ENCODE measurements at regions of chr22 and their contacts with region 1.

Region 1: GRCh38 chr22:30634471-30635233 is 929 bp upstream of the SLC35E4 start:
- DNase-seq: peak; percentile 86 to 88
- ATAC-seq: peak; percentile 81 to 84
- H3K4me3 ChIP-seq: peak overlapping the region; percentile 80
- H3K27ac ChIP-seq: peak overlapping the region; percentile 67 to 97
- H3K4me1 ChIP-seq: peaks cover 21% of the 10 kb centered on the region
- CTCF ChIP-seq: peak; percentile 78
- EP300 ChIP-seq: no peak
- POLR2A ChIP-seq: no peak
- RAD21 ChIP-seq: peak; percentile 79 to 81

Region 2: GRCh38 chr22:30606455-30607299 is 28.0 kb before region 1 on chr22 and contains the start of gene TCN2:
- CTCF ChIA-PET with region 1: interaction called, 27 read pairs
- POLR2A ChIA-PET with region 1: interaction called, 3 read pairs
- DNase-seq: peak; percentile 58 to 69
- ATAC-seq: peak; percentile 83 to 84
- H3K4me3 ChIP-seq: peak within 1 kb of the TSS; percentile 51
- H3K27ac ChIP-seq: peak within 1 kb of the TSS; percentile 78 to 90
- H3K4me1 ChIP-seq: peaks cover 32% of the 10 kb centered on the region
- CTCF ChIP-seq: no peak
- EP300 ChIP-seq: no peak
- POLR2A ChIP-seq: no peak
- RAD21 ChIP-seq: no peak
- polyA plus RNA-seq, gene TCN2: 4.3 and 5.6 TPM in 2 replicates

Region 3: DNA sequence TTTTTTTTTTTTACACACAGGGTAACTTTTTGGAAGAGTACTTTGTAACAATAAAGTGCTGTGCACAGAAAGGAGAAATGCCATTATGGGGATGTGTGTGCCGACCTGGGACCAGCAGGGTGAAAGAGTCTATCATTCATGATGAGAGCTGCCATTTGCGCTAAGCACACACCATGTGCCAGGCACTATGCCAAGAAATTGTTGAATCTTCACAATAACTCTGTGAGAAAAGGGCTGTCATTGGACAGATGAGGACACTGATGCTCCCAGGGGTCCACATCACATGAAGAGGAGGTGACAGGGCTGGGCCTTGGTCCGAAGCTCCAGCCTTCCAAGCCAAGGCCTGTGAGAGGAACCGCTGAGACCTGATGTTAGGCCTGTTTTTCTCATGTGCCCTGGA is 27.4 kb after region 1 on chr22:
- CTCF ChIA-PET with region 1: interaction called, 14 read pairs
- POLR2A ChIA-PET with region 1: no interaction called
- DNase-seq: no peak
- ATAC-seq: no peak
- H3K4me3 ChIP-seq: no peak overlapping the region
- H3K27ac ChIP-seq: no peak overlapping the region
- H3K4me1 ChIP-seq: 0 out of 3 replicates have a peak, but pooled peaks cover 3% of the 10 kb centered on the region
- CTCF ChIP-seq: no peak
- EP300 ChIP-seq: no peak
- POLR2A ChIP-seq: no peak
- RAD21 ChIP-seq: no peak

Region 4: DNA sequence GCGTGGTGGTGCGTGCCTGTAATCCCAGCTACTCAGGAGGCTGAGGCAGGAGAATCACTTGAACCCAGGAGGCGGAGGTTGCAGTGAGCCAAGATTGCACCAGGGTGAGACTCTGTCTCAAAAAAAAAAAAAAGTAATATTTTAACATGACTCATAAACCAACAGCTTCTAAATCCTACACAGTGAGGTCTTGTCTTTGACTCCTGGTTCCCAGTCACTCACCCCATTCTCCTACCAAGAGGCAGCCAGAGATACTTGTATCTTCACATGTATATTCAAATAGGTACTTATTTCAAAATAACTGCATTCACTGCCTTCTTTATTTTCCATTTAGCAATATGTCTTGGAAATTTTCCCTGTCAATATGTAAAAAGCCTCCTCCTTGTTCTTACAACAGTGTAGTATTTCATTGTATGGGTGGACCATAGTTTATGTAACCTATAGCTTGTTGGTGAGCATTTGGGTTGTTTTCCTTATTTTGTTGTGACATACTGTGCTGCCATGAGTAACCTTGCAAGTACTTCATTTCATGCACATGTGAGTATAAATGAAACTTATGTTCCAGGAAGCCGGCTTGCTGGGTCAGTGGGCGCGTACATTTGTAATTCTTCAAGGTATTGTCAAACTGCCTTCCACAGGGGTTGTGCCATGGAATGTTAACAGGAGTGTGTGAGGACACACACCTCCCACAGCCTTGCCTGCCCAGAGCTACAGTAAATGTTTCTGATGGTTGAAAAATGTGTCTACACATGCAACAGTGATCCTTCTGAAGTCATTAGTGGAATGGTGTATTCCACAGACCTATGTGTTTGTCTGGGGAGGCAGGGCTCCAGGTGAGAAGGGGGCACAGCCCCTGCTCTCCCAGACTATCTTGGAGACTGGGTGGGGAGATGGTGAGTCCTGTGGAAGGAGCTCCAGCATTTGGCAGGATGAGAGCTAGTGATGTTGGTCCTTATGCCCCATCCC is 107.9 kb after region 1 on chr22:
- CTCF ChIA-PET with region 1: interaction called, 12 read pairs
- POLR2A ChIA-PET with region 1: no interaction called
- DNase-seq: no peak
- ATAC-seq: no peak
- H3K4me3 ChIP-seq: no peak overlapping the region
- H3K27ac ChIP-seq: no peak overlapping the region
- H3K4me1 ChIP-seq: no peaks in the 10 kb centered on the region
- CTCF ChIP-seq: no peak
- EP300 ChIP-seq: no peak
- POLR2A ChIP-seq: no peak
- RAD21 ChIP-seq: no peak

Region 5: GRCh38 chr22:30830907-30831306 is 196.3 kb after region 1 on chr22:
- CTCF ChIA-PET with region 1: no interaction called
- POLR2A ChIA-PET with region 1: no interaction called
- DNase-seq: peak; percentile 70 to 96
- ATAC-seq: peak; percentile 77 to 85
- H3K4me3 ChIP-seq: peak overlapping the region; percentile 20; the same call in 1 of the 3 replicates
- H3K27ac ChIP-seq: peak overlapping the region; percentile 93 to 99
- H3K4me1 ChIP-seq: peaks cover 52% of the 10 kb centered on the region
- CTCF ChIP-seq: no peak
- EP300 ChIP-seq: peak; percentile 64 to 75; a peak in 3 of 5 replicates
- POLR2A ChIP-seq: no peak
- RAD21 ChIP-seq: no peak; a peak in 1 of 5 replicates

Measured in A549 (cell line).